ENCODE measurements at regions of chr9 and their contacts with region 1.

Region 1: GRCh38 chr9:93453047-93453914 is at the start of gene FAM120AOS:
- DNase-seq: peak; percentile 94
- H3K4me3 ChIP-seq: peak within 1 kb of the TSS; percentile 85 to 99 (median 88)
- H3K27ac ChIP-seq: peak within 1 kb of the TSS; percentile 58
- H3K4me1 ChIP-seq: peaks cover 11% of the 10 kb centered on the region
- H3K27me3 ChIP-seq: no peaks in the 10 kb centered on the region
- CTCF ChIP-seq: no peak
- POLR2A ChIP-seq: no peak
- total RNA-seq, gene FAM120AOS: 28.8 and 32.4 TPM in 2 replicates

Region 2: GRCh38 chr9:93254821-93255468 is 198.3 kb before region 1 on chr9:
- CTCF ChIA-PET with region 1: no interaction called
- POLR2A ChIA-PET with region 1: no interaction called
- dilution Hi-C with region 1: no loop called
- intact Hi-C with region 1: no loop called
- DNase-seq: no peak
- H3K4me3 ChIP-seq: no peak overlapping the region
- H3K27ac ChIP-seq: no peak overlapping the region
- H3K4me1 ChIP-seq: no peaks in the 10 kb centered on the region
- H3K27me3 ChIP-seq: no peaks in the 10 kb centered on the region
- CTCF ChIP-seq: no peak
- POLR2A ChIP-seq: no peak

Region 3: DNA sequence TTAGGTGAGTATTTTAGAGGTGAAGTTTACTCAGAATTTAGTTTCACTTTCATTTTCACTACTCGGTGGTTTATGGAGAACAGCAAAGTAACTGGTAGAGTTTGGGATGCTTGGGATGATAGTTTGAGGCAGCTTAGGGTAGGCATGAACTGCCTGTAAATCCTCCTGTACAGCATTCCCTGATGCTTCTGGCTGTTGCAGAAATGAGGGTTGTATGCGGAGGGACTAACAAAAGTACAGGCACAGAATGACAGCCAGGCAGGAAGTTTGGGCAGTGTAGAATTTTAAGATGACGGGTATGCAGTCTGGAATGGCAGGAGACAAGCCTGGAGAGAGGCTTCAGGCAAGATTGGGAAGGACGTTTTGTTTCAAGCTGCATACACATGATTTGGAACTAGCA is 48.1 kb after region 1 on chr9:
- CTCF ChIA-PET with region 1: no interaction called
- POLR2A ChIA-PET with region 1: interaction called, 3 read pairs
- dilution Hi-C with region 1: no loop called
- intact Hi-C with region 1: loop called (anchors 5 kb)
- DNase-seq: peak; percentile 58
- H3K4me3 ChIP-seq: peak overlapping the region; percentile 16 to 60 (median 34)
- H3K27ac ChIP-seq: peak overlapping the region; percentile 46
- H3K4me1 ChIP-seq: peaks cover 11% of the 10 kb centered on the region
- H3K27me3 ChIP-seq: no peaks in the 10 kb centered on the region
- CTCF ChIP-seq: no peak
- POLR2A ChIP-seq: no peak

Region 4: DNA sequence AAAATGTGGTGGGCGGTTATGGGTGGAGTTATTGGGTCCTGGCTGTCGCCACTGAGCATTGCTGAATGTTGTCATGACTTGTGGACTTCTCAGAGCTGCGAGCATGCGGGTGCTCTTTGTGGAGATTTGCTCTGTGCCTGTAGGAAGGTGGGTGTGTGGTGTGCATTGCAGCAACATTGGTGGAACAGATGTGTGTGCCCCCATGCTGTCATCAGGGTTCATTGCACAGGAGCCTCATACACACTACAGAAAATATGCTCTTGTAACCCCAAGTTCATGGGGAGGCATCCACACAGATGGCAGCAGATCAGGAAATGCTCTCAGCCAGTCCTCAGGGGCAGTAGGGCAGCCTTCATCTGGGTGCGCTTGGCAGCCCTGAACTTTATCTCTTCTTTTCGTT is 67.2 kb after region 1 on chr9:
- CTCF ChIA-PET with region 1: no interaction called
- POLR2A ChIA-PET with region 1: no interaction called
- dilution Hi-C with region 1: no loop called
- intact Hi-C with region 1: loop called (anchors 5 kb)
- DNase-seq: peak; percentile 7
- H3K4me3 ChIP-seq: no peak overlapping the region
- H3K27ac ChIP-seq: no peak overlapping the region
- H3K4me1 ChIP-seq: no peaks in the 10 kb centered on the region
- H3K27me3 ChIP-seq: no peaks in the 10 kb centered on the region
- CTCF ChIP-seq: peak in 1 of 2 donors; percentile 9
- POLR2A ChIP-seq: no peak

Region 5: DNA sequence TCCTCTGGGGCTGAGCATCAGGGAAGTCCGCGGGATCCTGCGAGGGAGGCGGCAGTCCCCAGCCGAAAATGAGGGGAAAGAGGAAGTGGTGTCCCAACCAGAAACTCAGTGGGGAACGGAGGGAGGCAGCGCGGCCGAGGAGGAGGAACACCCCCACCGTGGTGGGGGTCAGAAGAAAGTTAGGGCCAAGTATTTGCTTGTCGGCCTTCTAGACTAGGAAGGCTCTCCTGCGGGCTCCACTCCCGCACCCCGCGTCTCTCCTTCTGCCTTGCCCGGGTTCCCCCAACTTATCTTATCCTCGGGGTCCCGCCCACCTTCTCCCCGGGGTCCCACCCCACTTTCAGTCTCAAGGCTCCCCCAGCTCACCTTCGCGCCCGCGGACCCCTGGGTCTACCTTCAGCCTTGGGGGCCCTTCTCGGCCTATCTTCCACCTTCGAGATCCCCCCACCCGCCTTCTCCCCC is 122.5 kb after region 1 on chr9:
- CTCF ChIA-PET with region 1: no interaction called
- POLR2A ChIA-PET with region 1: no interaction called
- dilution Hi-C with region 1: no loop called
- intact Hi-C with region 1: loop called (anchors 2 kb)
- DNase-seq: peak; percentile 45
- H3K4me3 ChIP-seq: peak overlapping the region; percentile 62 to 83 (median 70)
- H3K27ac ChIP-seq: peak overlapping the region; percentile 22
- H3K4me1 ChIP-seq: peaks cover 7% of the 10 kb centered on the region
- H3K27me3 ChIP-seq: no peaks in the 10 kb centered on the region
- CTCF ChIP-seq: no peak
- POLR2A ChIP-seq: no peak

Region 6: GRCh38 chr9:93697352-93698139 is 244.3 kb after region 1 on chr9:
- CTCF ChIA-PET with region 1: no interaction called
- POLR2A ChIA-PET with region 1: no interaction called
- dilution Hi-C with region 1: no loop called
- intact Hi-C with region 1: no loop called
- DNase-seq: no peak
- H3K4me3 ChIP-seq: no peak overlapping the region
- H3K27ac ChIP-seq: no peak overlapping the region
- H3K4me1 ChIP-seq: no peaks in the 10 kb centered on the region
- H3K27me3 ChIP-seq: peaks cover 2% of the 10 kb centered on the region in 2 experiments
- CTCF ChIP-seq: no peak
- POLR2A ChIP-seq: no peak

Region 7: DNA sequence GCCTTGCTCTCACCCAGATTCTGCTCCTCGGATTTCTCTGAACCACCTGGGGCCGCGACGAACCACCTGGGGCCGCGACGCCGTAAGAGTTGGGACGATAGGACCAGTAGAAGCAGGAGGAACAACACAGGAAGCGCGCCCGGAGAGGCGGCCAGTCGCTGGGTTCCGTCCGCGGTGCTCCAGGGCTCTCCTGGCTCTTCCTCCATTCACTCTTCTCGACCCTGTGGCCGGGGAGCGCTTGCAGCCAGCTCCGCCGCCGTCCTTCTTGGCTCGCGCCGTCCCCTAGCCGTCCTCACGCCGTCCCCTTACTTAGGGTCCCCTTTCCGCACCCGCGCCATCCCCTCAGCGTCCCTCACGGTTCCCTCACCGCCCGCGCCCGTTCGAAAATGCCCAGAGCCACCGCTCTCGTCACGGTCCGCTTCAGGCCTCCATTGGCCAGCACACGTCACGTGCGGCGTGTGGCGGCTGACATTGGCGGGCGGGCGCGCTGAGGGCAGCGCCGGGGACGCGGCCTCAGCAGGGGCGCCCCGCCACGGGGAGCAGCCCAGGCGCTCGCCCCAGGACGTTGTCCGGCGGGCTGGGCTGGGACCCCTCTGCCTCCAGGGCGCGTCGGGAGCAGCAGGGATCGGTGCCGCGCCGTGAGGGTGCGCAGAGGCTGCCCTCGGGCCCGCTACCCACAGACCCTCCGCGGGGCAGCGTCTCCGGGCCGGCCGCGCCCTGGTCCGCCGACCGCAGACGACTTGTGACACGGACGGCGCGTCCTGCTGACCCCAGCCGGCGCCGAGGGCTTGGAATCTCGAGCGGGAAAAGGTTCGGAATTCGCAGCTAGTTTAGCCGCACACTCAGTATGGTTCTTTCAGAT is 577.3 kb after region 1 on chr9:
- CTCF ChIA-PET with region 1: no interaction called
- POLR2A ChIA-PET with region 1: no interaction called
- dilution Hi-C with region 1: no loop called
- intact Hi-C with region 1: loop called (anchors 2 kb)
- DNase-seq: peak; percentile 88
- H3K4me3 ChIP-seq: peak overlapping the region; percentile 70 to 87 (median 86)
- H3K27ac ChIP-seq: peak overlapping the region; percentile 54
- H3K4me1 ChIP-seq: peaks cover 14% of the 10 kb centered on the region
- H3K27me3 ChIP-seq: no peaks in the 10 kb centered on the region
- CTCF ChIP-seq: no peak
- POLR2A ChIP-seq: peak; percentile 58